ENCODE measurements at regions of chr5 and their contacts with region 1.

Region 1: GRCh38 chr5:109805883-109806282 is 116.2 kb downstream of the MAN2A1 start:
- DNase-seq: no peak
- H3K4me3 ChIP-seq: no peak overlapping the region
- H3K27ac ChIP-seq: no peak overlapping the region
- H3K4me1 ChIP-seq: no peaks in the 10 kb centered on the region
- H3K27me3 ChIP-seq: no peaks in the 10 kb centered on the region
- CTCF ChIP-seq: no peak
- POLR2A ChIP-seq: no peak

Region 2: DNA sequence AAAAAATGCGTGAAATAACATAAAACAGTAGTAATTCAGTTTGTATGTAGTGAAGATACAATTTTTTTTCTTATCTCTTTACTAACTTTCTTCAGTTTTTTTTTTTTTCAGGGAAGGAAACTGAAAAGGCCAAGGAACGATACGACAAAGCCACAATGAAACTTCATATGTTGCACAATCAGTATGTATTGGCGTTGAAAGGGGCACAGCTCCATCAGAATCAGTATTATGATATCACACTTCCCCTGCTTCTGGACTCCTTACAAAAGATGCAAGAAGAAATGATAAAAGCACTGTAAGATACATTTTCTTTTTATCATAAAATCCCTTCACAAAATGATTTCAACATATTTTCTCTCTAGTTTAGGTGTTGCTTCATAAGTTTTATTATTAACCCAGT is 938.2 kb before region 1 on chr5:
- intact Hi-C with region 1: loop called (anchors 5 kb)
- DNase-seq: no peak
- H3K4me3 ChIP-seq: no peak overlapping the region
- H3K27ac ChIP-seq: no peak overlapping the region
- H3K4me1 ChIP-seq: no peaks in the 10 kb centered on the region
- H3K27me3 ChIP-seq: no peaks in the 10 kb centered on the region
- CTCF ChIP-seq: no peak
- POLR2A ChIP-seq: no peak

Region 3: GRCh38 chr5:109779036-109779735 is 26.7 kb before region 1 on chr5:
- intact Hi-C with region 1: no loop called
- DNase-seq: no peak
- H3K4me3 ChIP-seq: no peak overlapping the region
- H3K27ac ChIP-seq: no peak overlapping the region
- H3K4me1 ChIP-seq: no peaks in the 10 kb centered on the region
- H3K27me3 ChIP-seq: no peaks in the 10 kb centered on the region
- CTCF ChIP-seq: no peak
- POLR2A ChIP-seq: no peak

Region 4: GRCh38 chr5:110371725-110372041 is 565.8 kb after region 1 on chr5:
- intact Hi-C with region 1: no loop called
- DNase-seq: no peak
- H3K4me3 ChIP-seq: no peak overlapping the region
- H3K27ac ChIP-seq: no peak overlapping the region
- H3K4me1 ChIP-seq: no peaks in the 10 kb centered on the region
- H3K27me3 ChIP-seq: no peaks in the 10 kb centered on the region
- CTCF ChIP-seq: no peak
- POLR2A ChIP-seq: no peak

Measured in breast epithelium (tissue), 4 donors.